Naive thymus-derived CD4-positive, alpha-beta T cell (primary cell): ENCODE measurements at regions of chr11 and their contacts with region 1.

Region 1: DNA sequence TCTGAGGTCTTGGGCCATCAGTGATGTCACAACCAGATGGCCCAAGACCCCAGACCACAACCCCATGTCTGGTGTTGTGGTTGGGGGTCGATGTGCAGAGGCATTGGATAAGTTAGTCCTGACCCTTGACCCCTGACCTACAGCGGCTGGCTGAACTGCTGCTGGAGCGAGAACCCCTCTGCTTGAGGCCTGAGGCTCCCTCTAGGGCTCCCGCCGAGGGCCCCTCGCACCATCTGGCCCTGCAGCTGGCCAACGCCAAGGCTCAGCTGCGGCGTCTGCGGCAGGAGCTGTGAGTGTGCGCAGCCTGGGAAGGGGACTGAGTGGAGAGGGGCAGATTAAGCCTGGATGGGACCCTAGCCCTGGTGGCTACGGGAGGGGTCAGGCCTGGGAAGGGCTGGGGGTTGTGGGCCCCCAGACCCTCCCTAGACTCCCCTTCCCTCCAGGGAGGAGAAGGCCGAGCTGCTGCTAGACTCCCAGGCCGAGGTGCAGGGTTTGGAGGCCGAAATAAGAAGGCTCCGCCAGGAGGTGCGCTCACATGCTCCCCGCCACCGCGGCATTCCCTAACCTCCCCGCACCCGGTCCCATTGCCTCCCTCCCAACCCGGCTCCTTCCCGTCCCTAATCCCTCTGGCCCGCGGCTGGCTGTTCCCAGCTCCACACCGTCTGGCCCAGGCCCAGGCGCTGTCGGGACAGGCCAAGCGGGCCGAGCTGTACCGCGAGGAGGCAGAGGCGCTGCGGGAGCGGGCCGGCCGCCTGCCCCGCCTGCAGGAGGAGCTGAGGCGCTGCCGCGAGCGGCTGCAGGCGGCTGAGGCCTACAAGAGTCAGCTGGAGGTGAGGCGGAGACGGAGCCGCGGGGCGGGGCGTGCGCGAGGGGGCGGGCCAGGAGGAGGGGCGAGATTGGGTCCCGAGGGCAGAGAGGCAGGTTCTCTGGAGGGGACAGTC is 2.1 kb downstream of the CCDC88B start:
- DNase-seq: peak; percentile 82 to 96 (median 88)
- ATAC-seq: peak; percentile 80
- H3K4me3 ChIP-seq: no peak overlapping the region
- H3K4me3 Mint-ChIP-seq: peak overlapping the region in 9 of 10 donors; percentile 9 to 91 (median 76)
- H3K27ac ChIP-seq: peak overlapping the region; percentile 40
- H3K27ac Mint-ChIP-seq: peak overlapping the region in 3 of 9 donors; percentile 25 to 75 (median 42)
- H3K4me1 ChIP-seq: peaks cover 29 to 30% of the 10 kb centered on the region in 2 donors
- H3K4me1 Mint-ChIP-seq: peaks cover 23 to 49% (median 30%) of the 10 kb centered on the region in 7 donors
- H3K27me3 ChIP-seq: no peaks in the 10 kb centered on the region
- H3K27me3 Mint-ChIP-seq: peaks cover 0 to 2% (median 0%) of the 10 kb centered on the region in 5 donors

Region 2: GRCh38 chr11:64358907-64359711 is 17.0 kb after region 1 on chr11 and contains the start of gene RPS6KA4:
- CTCF ChIA-PET with region 1: interaction called, 3 read pairs
- POLR2A ChIA-PET with region 1: interaction called, 4 read pairs
- intact Hi-C with region 1: loop called (anchors 1 kb)
- DNase-seq: peak in 7 of 9 donors; percentile 25 to 79 (median 36)
- ATAC-seq: peak; percentile 80
- H3K4me3 ChIP-seq: peak within 1 kb of the TSS; percentile 60
- H3K4me3 Mint-ChIP-seq: peak within 1 kb of the TSS; percentile 83 to 100 (median 91)
- H3K27ac ChIP-seq: peak within 1 kb of the TSS; percentile 68
- H3K27ac Mint-ChIP-seq: peak within 1 kb of the TSS; percentile 56 to 94 (median 72)
- H3K4me1 ChIP-seq: peaks cover 10 to 16% of the 10 kb centered on the region in 2 donors
- H3K4me1 Mint-ChIP-seq: peaks cover 16 to 40% (median 30%) of the 10 kb centered on the region in 7 donors
- H3K27me3 ChIP-seq: no peaks in the 10 kb centered on the region
- H3K27me3 Mint-ChIP-seq: no peaks in the 10 kb centered on the region
- total RNA-seq, gene RPS6KA4: 14.2 to 35.7 (median 27.9) TPM